GM10248 (cell line): ENCODE measurements at regions of chr4 and their contacts with region 1.

Region 1: DNA sequence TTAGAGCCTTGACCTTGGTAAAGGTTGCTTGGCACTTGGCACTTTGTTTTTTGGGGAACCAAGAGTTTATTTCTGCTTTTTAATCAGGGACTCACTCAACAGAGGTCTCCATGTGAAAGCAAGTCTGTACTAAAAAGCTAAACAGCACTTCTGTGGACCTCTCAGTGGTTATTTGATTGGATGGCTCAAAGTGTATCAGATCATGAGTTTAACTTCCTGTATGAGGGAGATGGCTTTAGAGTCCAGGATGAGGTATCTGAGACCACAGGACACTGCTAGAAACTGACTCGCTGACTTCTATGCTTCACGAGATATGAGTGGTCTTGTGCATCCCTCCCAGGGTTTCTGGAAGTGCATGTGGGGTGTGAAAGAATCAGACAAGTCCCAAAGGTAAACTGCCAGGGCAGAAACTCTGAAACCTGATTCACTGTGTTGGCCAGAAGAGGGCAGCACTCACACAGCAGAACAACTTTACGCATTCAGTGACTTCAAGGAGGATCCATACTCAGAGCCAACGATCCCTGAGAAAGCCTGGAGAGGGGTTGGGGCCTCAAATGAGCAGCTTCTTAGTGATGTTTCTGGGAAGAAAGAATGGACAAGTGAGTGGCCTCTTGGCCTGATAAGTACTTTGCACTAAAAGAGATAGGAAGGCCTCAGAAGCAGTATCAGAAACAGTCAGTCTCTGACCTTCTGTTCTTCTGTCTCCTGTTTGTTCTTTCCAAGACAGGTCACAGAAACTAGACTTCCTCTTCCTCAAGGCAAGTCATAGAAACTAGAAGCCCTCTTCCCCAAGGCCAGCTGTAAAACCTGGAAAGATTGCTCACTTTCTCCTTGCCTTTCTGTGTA is 220.3 kb upstream of the CXCL13 start:
- DNase-seq: peak; percentile 48
- CTCF ChIP-seq: peak; percentile 80

Region 2: DNA sequence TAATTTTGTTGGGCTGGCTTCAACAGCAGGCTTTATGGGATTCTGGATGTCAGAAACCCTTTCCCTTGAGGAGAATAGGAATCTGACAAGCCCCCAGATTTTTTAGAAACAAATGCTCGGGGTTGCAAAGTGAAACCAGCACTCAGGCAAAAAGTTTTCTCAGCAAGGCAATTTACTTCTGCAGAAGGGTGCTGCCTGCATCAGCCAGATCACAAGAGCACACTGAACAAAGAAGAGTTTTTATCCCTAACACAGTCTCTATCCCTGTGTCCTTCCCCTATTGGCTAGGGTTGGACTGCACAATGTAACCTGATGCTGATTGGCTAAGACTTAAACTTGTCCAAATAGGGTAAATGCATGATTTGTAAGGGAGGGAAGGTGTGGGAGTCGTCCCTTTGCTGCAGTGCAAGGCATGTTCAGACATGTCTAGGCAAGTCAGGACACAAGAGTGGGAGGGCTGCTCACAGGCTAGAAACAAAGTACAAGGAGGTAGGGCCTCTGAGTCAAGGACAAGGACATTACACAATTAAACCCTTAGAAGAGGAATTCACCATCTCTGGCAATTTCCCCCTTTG is 52.6 kb before region 1 on chr4:
- CTCF ChIA-PET with region 1: no interaction called
- POLR2A ChIA-PET with region 1: no interaction called
- DNase-seq: no peak
- CTCF ChIP-seq: no peak

Region 3: DNA sequence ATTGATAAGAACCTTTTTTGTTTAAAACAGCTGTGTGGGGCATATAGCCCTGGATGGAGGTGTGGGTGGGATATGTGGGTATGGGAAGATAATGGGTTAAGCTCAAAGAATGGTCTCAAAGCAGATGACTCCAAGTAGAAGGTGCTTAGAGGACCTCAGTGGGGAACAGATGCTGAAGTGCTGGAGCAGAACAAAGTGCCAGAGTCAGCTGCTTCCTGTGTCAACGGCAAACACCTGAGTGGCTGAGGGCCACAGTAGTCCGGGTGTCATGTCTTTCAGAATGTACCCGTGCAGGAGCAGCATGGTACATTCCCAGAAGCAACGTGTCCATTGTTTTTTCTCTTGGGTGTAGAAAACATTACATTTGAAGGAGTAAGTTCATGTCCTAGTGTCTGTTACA is 17.7 kb before region 1 on chr4:
- CTCF ChIA-PET with region 1: interaction called, 11 read pairs
- POLR2A ChIA-PET with region 1: no interaction called
- DNase-seq: no peak
- CTCF ChIP-seq: no peak